Activated CD4-positive, alpha-beta memory T cell treated with anti-CD3 and anti-CD28 coated beads for 36 hours (primary cell): ENCODE measurements at regions of chr7 and their contacts with region 1.

Region 1: DNA sequence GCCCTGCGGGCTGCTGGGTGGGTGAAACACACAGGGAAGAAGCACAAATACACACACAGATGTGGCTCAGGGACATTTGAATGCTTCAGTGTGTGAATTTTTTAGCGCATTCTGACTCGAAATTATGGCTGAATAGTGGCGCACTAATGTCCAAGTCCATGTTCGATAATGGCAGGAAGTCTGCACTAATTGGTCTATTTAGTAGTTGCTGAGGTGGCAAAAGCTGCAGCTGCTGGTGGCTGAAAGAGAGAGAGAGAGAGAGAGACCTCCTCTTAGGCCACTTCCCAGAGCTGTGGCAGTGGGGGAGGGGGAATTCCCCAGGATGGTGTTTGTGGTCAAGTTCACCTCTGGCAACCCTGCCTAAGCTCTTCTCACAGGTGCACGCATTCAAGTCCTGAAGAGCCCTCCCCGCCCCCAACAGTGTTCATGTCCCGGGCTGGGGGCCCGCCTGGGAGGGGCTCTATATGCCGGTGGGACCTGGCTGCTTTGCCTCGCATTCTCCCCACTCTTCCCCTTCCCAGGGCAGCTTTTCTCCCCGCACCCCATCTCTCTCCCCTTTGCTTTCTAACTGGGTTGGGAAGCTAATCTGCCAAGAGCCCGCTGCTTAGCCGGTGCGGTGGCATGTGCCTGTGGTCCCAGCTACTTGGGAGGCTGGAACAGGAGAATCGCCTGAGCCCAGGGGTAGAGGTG is 6.0 kb upstream of the MNX1 start:
- DNase-seq: peak; percentile 78
- H3K4me3 Mint-ChIP-seq: no peak overlapping the region
- H3K27ac Mint-ChIP-seq: no peak overlapping the region
- H3K4me1 Mint-ChIP-seq: peaks cover 25% of the 10 kb centered on the region
- H3K27me3 Mint-ChIP-seq: peaks cover 72% of the 10 kb centered on the region

Region 2: DNA sequence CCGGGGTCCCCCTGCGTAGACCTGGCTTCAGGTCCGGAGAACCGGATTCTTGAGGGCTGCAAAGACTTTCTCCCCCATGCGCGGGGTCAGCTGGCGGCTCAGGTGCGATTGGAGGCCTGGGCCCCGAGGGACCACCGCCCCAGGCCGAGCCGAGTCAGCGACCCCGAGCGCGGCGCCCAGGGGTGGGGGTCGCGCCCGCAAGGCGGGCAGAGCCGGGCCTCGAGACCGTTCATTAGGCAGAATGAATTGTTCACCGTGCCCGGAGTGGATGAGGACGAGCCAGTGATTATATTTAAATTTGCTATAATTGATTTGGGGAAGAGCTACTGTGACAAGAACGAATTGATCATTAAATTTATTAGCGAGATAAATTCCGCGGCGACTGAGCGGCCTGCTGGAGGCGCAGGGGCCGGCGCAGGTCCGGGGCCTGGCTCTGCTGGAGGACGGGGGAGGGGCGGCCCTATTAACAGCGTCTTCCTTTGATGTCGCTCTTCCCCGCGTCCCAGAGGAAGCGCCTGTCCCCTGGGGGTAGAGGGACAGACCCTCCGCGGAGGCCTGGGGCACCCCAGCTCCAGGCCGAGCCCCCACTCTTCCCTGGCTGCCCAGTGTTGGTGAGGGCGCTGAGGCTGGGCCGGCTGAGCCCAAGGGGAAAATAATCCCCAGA is 13.5 kb before region 1 on chr7:
- CTCF ChIA-PET with region 1: no interaction called
- POLR2A ChIA-PET with region 1: no interaction called
- intact Hi-C with region 1: loop called (anchors 2 kb)
- DNase-seq: no peak
- H3K4me3 Mint-ChIP-seq: no peak overlapping the region
- H3K27ac Mint-ChIP-seq: no peak overlapping the region
- H3K4me1 Mint-ChIP-seq: peaks cover 31% of the 10 kb centered on the region
- H3K27me3 Mint-ChIP-seq: peaks cover 64% of the 10 kb centered on the region